Activated CD4-positive, alpha-beta T cell treated with anti-CD3 and anti-CD28 coated beads for 36 hours (primary cell): ENCODE measurements at regions of chr16 and their contacts with region 1.

Region 1: GRCh38 chr16:50326949-50327402 is 41.8 kb downstream of the BRD7 start:
- DNase-seq: peak; percentile 81
- ATAC-seq: peak; percentile 92
- H3K4me3 Mint-ChIP-seq: no peak overlapping the region
- H3K27ac Mint-ChIP-seq: peak overlapping the region; percentile 82
- H3K4me1 Mint-ChIP-seq: peaks cover 58% of the 10 kb centered on the region
- H3K27me3 Mint-ChIP-seq: no peaks in the 10 kb centered on the region

Region 2: GRCh38 chr16:50251375-50252081 is 75.4 kb before region 1 on chr16:
- CTCF ChIA-PET with region 1: interaction called, 3 read pairs
- POLR2A ChIA-PET with region 1: interaction called, 11 read pairs
- intact Hi-C with region 1: no loop called
- DNase-seq: no peak
- ATAC-seq: peak; percentile 27
- H3K4me3 Mint-ChIP-seq: no peak overlapping the region
- H3K27ac Mint-ChIP-seq: no peak overlapping the region
- H3K4me1 Mint-ChIP-seq: peaks cover 11% of the 10 kb centered on the region
- H3K27me3 Mint-ChIP-seq: no peaks in the 10 kb centered on the region

Region 3: DNA sequence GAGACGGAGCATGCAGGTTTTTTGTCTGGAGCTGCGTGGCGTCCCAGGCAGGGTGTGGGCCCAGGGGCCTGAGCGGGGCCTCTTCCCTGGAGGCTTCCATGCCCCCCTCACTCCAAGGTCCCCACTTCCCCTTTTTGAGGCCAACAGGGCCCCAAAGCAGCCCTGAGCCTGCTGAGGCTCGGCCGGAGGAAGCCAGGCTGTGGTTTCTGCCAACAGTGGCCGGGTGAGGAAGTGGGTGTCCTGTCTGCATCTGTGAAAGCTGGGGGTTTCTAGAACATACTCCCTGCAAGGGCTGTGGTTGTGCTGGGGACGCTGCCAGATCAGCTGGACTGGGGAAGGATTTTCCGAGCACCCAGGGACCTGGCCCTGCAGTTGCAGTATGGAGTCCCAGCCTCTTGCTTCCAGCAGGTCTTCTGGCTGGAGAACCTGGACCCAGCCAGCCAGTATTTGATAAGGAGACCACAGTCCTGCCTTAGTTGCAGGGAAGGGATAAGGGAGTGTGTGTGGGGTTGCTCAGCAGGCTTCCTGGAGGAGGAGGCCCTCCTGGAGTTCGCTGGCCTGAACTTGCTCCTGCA is 44.9 kb before region 1 on chr16:
- CTCF ChIA-PET with region 1: interaction called, 10 read pairs
- POLR2A ChIA-PET with region 1: no interaction called
- intact Hi-C with region 1: no loop called
- DNase-seq: peak; percentile 67
- ATAC-seq: peak; percentile 21
- H3K4me3 Mint-ChIP-seq: peak overlapping the region; percentile 43
- H3K27ac Mint-ChIP-seq: peak overlapping the region; percentile 55
- H3K4me1 Mint-ChIP-seq: peaks cover 92% of the 10 kb centered on the region
- H3K27me3 Mint-ChIP-seq: no peaks in the 10 kb centered on the region

Region 4: GRCh38 chr16:50313596-50314478 is 13.1 kb before region 1 on chr16:
- CTCF ChIA-PET with region 1: interaction called, 11 read pairs
- POLR2A ChIA-PET with region 1: no interaction called
- intact Hi-C with region 1: no loop called
- DNase-seq: peak; percentile 67
- ATAC-seq: peak; percentile 75
- H3K4me3 Mint-ChIP-seq: no peak overlapping the region
- H3K27ac Mint-ChIP-seq: peak overlapping the region; percentile 88
- H3K4me1 Mint-ChIP-seq: peaks cover 29% of the 10 kb centered on the region
- H3K27me3 Mint-ChIP-seq: no peaks in the 10 kb centered on the region

Region 5: GRCh38 chr16:50354629-50355456 is 27.9 kb after region 1 on chr16:
- CTCF ChIA-PET with region 1: interaction called, 304 read pairs
- POLR2A ChIA-PET with region 1: interaction called, 4 read pairs
- intact Hi-C with region 1: loop called (anchors 1 kb)
- DNase-seq: no peak
- ATAC-seq: no peak
- H3K4me3 Mint-ChIP-seq: no peak overlapping the region
- H3K27ac Mint-ChIP-seq: no peak overlapping the region
- H3K4me1 Mint-ChIP-seq: peaks cover 34% of the 10 kb centered on the region
- H3K27me3 Mint-ChIP-seq: no peaks in the 10 kb centered on the region

Region 6: DNA sequence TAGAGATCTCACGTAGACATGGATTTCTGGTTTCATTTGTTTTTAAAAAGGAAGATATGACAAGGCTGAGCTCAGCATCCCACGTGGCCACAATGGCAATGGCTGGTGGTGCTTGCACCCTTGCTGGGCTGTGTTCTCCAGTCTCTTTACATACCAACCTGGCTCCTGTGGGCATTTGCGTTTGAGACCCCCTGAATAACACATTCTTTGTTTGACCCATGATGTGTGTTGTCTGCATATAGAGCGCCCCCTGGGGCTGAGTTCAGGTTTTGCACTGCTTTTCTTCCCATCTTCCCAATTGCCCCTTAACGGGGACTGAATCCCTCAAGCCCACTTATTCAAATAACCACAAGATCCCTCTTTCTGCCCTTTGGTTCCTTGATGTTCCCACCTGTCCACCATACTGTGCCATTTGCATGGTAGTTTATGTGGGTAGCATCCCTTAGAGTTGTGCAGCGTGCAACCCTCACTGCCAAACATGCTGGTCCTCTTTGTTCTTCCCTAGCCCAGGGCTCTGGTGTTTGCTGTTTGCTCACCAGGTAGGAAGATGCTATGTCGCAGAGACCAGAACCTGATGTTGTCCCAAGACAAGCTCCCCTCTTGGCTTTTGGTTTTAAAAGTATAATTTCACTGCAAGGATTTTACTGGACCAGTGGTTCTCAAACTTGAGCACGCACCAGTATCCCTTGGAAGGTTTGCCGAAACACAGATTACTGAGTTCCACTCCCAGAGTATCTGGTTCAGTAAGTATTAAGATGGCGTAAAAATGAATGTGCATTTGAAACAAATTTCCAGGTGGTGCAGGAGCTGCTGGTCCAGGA is 182.8 kb after region 1 on chr16:
- CTCF ChIA-PET with region 1: interaction called, 5 read pairs
- POLR2A ChIA-PET with region 1: no interaction called
- intact Hi-C with region 1: loop called (anchors 1 to 2 kb)
- DNase-seq: peak; percentile 65
- ATAC-seq: peak; percentile 36
- H3K4me3 Mint-ChIP-seq: no peak overlapping the region
- H3K27ac Mint-ChIP-seq: no peak overlapping the region
- H3K4me1 Mint-ChIP-seq: no peaks in the 10 kb centered on the region
- H3K27me3 Mint-ChIP-seq: no peaks in the 10 kb centered on the region